ENCODE measurements at regions of chr3 and their contacts with region 1.

Region 1: GRCh38 chr3:185498503-185499396 is at the start of gene TMEM41A:
- DNase-seq: peak; percentile 94 to 97 (median 95)
- ATAC-seq: peak; percentile 97 to 99 (median 98)
- H3K4me3 ChIP-seq: peak within 1 kb of the TSS; percentile 65 to 98 (median 83)
- H3K27ac ChIP-seq: peak within 1 kb of the TSS; percentile 3 to 91 (median 81)
- H3K4me1 ChIP-seq: peaks cover 3 to 36% (median 14%) of the 10 kb centered on the region in 12 donors
- H3K27me3 ChIP-seq: no peaks in the 10 kb centered on the region
- CTCF ChIP-seq: peak in 3 of 12 donors; percentile 2 to 19 (median 13)
- POLR2A ChIP-seq: peak; percentile 32 to 91
- total RNA-seq, gene TMEM41A: 10.1 to 13.5 (median 10.8) TPM

Region 2: DNA sequence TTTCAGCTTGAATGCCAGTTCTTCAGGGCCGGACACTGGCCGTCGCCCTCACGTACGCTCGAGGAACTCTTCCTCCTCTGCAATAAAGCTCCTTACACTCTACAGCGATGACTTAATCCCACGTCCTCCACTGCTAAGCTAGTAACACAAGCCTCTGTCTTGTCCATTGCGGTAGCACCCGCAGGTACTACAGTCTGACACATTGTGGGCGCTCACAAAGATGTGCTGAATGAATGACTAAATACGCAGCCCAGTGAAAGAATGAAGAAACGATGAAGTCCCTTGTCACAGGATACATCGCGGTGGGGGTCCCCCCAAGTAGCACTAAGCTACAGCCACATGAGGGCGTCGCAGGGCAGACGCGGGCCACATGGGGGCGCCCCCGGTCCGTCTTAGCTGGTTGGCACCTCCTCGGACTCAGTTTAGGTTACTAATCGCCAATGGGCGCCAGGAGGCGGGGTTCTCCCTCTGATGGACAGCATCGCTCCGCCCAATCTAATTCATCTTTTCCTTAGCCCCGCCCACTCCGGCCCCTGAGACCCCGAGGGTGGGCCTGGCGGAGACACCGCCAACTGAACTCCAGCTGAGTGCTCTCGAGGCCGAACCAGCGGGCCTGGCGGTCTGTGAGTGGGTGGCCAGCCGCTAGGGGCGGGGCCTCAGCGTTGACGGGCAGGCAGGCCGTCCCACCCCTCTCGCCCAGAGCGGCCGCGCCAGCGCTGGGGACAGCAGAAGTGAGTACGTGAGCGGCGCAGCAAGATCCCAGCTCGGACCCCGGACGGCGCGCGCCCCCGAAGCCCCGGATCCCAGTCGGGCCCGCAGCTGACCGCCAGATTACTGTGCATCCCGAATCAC is 937.5 kb before region 1 on chr3 and contains the start of gene EPHB3:
- intact Hi-C with region 1: no loop called
- DNase-seq: peak; percentile 99 to 100 (median 99)
- ATAC-seq: peak; percentile 96 to 98 (median 98)
- H3K4me3 ChIP-seq: peak within 1 kb of the TSS; percentile 41 to 82 (median 66)
- H3K27ac ChIP-seq: peak within 1 kb of the TSS in 8 of 12 donors; percentile 29 to 73 (median 60)
- H3K4me1 ChIP-seq: peaks cover 0 to 44% (median 22%) of the 10 kb centered on the region in 12 donors
- H3K27me3 ChIP-seq: peaks cover 0 to 25% (median 4%) of the 10 kb centered on the region in 9 donors
- CTCF ChIP-seq: peak; percentile 91 to 100 (median 100)
- POLR2A ChIP-seq: peak; percentile 76 to 95
- total RNA-seq, gene EPHB3: 1.00 to 4.6 (median 2.4) TPM

Region 3: GRCh38 chr3:185282696-185283394 is 215.9 kb before region 1 on chr3:
- intact Hi-C with region 1: loop called in 1 of 10 experiments (anchors 5 kb)
- DNase-seq: peak; percentile 95 to 97 (median 97)
- ATAC-seq: peak; percentile 99 to 100 (median 100)
- H3K4me3 ChIP-seq: peak overlapping the region; percentile 60 to 83 (median 72)
- H3K27ac ChIP-seq: peak overlapping the region in 9 of 12 donors; percentile 6 to 61 (median 51)
- H3K4me1 ChIP-seq: peaks cover 0 to 14% (median 10%) of the 10 kb centered on the region in 12 donors
- H3K27me3 ChIP-seq: peaks cover 0 to 12% (median 0%) of the 10 kb centered on the region in 9 donors
- CTCF ChIP-seq: no peak
- POLR2A ChIP-seq: peak in 1 of 2 donors; percentile 47

Region 4: GRCh38 chr3:185362850-185363661 is 135.7 kb before region 1 on chr3 and contains the start of gene MAP3K13:
- intact Hi-C with region 1: loop called in 1 of 10 experiments (anchors 10 kb)
- DNase-seq: peak; percentile 76 to 90 (median 83)
- ATAC-seq: peak; percentile 98 to 100 (median 100)
- H3K4me3 ChIP-seq: peak within 1 kb of the TSS; percentile 49 to 75 (median 62)
- H3K27ac ChIP-seq: peak within 1 kb of the TSS in 9 of 12 donors; percentile 19 to 77 (median 60)
- H3K4me1 ChIP-seq: peaks cover 0 to 11% (median 5%) of the 10 kb centered on the region in 12 donors
- H3K27me3 ChIP-seq: peaks cover 0 to 11% (median 0%) of the 10 kb centered on the region in 9 donors
- CTCF ChIP-seq: no peak
- POLR2A ChIP-seq: no peak
- total RNA-seq, gene MAP3K13: 4.8 to 18.5 (median 11.4) TPM

Region 5: GRCh38 chr3:185521349-185522138 is 22.8 kb after region 1 on chr3:
- intact Hi-C with region 1: loop called in 1 of 10 experiments (anchors 1 kb)
- DNase-seq: peak in 4 of 5 donors; percentile 33 to 59 (median 47)
- ATAC-seq: peak; percentile 64 to 92 (median 90)
- H3K4me3 ChIP-seq: no peak overlapping the region
- H3K27ac ChIP-seq: peak overlapping the region in 4 of 12 donors; percentile 0 to 50 (median 31)
- H3K4me1 ChIP-seq: no peaks in the 10 kb centered on the region
- H3K27me3 ChIP-seq: no peaks in the 10 kb centered on the region
- CTCF ChIP-seq: no peak
- POLR2A ChIP-seq: no peak

Region 6: DNA sequence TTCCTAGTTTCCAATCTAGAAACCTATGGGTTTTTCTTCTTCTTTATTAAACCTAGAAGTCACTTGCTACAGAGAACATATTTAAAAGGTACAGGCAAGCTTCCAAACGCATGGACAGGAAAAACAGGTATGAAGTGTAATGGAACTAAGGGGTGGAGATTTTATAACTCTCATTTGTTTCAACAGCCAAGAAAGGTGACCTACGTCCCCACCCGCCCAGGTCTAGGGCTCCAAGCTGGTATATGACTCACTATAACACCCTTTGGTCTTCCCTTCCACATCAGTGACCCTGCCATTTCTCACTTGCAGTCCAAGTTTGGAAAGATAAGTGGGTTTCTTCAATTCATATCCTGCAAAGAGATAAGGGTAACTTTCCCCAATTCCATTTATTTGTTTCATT is 59.6 kb after region 1 on chr3:
- intact Hi-C with region 1: loop called in 8 of 10 experiments (anchors 5 kb)
- DNase-seq: no peak
- ATAC-seq: no peak
- H3K4me3 ChIP-seq: no peak overlapping the region
- H3K27ac ChIP-seq: no peak overlapping the region
- H3K4me1 ChIP-seq: peaks cover 0 to 19% (median 0%) of the 10 kb centered on the region in 12 donors
- H3K27me3 ChIP-seq: peaks cover 0 to 22% (median 0%) of the 10 kb centered on the region in 9 donors
- CTCF ChIP-seq: no peak
- POLR2A ChIP-seq: no peak

Region 7: GRCh38 chr3:185585859-185586685 is 87.3 kb after region 1 on chr3 and contains the start of gene SENP2:
- intact Hi-C with region 1: loop called in 1 of 10 experiments (anchors 2 kb)
- DNase-seq: peak; percentile 99
- ATAC-seq: peak; percentile 98 to 99 (median 98)
- H3K4me3 ChIP-seq: peak within 1 kb of the TSS; percentile 64 to 99 (median 84)
- H3K27ac ChIP-seq: peak within 1 kb of the TSS; percentile 82 to 99 (median 92)
- H3K4me1 ChIP-seq: peaks cover 0 to 38% (median 24%) of the 10 kb centered on the region in 12 donors
- H3K27me3 ChIP-seq: no peaks in the 10 kb centered on the region
- CTCF ChIP-seq: no peak
- POLR2A ChIP-seq: peak; percentile 20 to 78
- total RNA-seq, gene SENP2: 19.3 to 42.4 (median 33.1) TPM

Region 8: GRCh38 chr3:185744997-185745843 is 246.5 kb after region 1 on chr3:
- intact Hi-C with region 1: no loop called
- DNase-seq: no peak
- ATAC-seq: peak in 1 of 4 donors; percentile 26
- H3K4me3 ChIP-seq: no peak overlapping the region
- H3K27ac ChIP-seq: no peak overlapping the region
- H3K4me1 ChIP-seq: peaks cover 0 to 7% (median 0%) of the 10 kb centered on the region in 12 donors
- H3K27me3 ChIP-seq: no peaks in the 10 kb centered on the region
- CTCF ChIP-seq: no peak
- POLR2A ChIP-seq: no peak

Region 9: GRCh38 chr3:185959609-185960517 is 461.1 kb after region 1 on chr3:
- intact Hi-C with region 1: no loop called
- DNase-seq: no peak
- ATAC-seq: peak in 2 of 4 donors; percentile 47 to 49
- H3K4me3 ChIP-seq: peak overlapping the region in 4 of 12 donors; percentile 24 to 44 (median 31)
- H3K27ac ChIP-seq: peak overlapping the region in 1 of 12 donors; percentile 37
- H3K4me1 ChIP-seq: peaks cover 0 to 16% (median 0%) of the 10 kb centered on the region in 12 donors
- H3K27me3 ChIP-seq: no peaks in the 10 kb centered on the region
- CTCF ChIP-seq: no peak
- POLR2A ChIP-seq: no peak

Region 10: GRCh38 chr3:187382609-187383151 is 1883.9 kb after region 1 on chr3:
- intact Hi-C with region 1: no loop called
- DNase-seq: no peak
- ATAC-seq: no peak
- H3K4me3 ChIP-seq: no peak overlapping the region
- H3K27ac ChIP-seq: no peak overlapping the region
- H3K4me1 ChIP-seq: peaks cover 0 to 6% (median 0%) of the 10 kb centered on the region in 12 donors
- H3K27me3 ChIP-seq: no peaks in the 10 kb centered on the region
- CTCF ChIP-seq: no peak
- POLR2A ChIP-seq: no peak

Measured in heart left ventricle (tissue), 16 donors.